K562 (cell line): ENCODE measurements at regions of chr1 and their contacts with region 1.

Region 1: GRCh38 chr1:14924455-14925331 is 228.9 kb upstream of the TMEM51 start:
- DNase-seq: peak; percentile 72 to 88 (median 82)
- ATAC-seq: peak; percentile 78
- H3K4me3 ChIP-seq: peak overlapping the region; percentile 59
- H3K27ac ChIP-seq: peak overlapping the region; percentile 1; the same call in 1 of the 3 replicates
- H3K4me1 ChIP-seq: peaks cover 29 to 33% of the 10 kb centered on the region in 2 experiments
- H3K27me3 ChIP-seq: no peaks in the 10 kb centered on the region; a peak in 1 of 5 replicates
- CTCF ChIP-seq: peak in 2 of 3 experiments; percentile 41 to 42; a peak in 3 of 6 replicates
- EP300 ChIP-seq: no peak
- POLR2A ChIP-seq: no peak
- RAD21 ChIP-seq: peak; percentile 39 to 55; a peak in 3 of 4 replicates

Region 2: DNA sequence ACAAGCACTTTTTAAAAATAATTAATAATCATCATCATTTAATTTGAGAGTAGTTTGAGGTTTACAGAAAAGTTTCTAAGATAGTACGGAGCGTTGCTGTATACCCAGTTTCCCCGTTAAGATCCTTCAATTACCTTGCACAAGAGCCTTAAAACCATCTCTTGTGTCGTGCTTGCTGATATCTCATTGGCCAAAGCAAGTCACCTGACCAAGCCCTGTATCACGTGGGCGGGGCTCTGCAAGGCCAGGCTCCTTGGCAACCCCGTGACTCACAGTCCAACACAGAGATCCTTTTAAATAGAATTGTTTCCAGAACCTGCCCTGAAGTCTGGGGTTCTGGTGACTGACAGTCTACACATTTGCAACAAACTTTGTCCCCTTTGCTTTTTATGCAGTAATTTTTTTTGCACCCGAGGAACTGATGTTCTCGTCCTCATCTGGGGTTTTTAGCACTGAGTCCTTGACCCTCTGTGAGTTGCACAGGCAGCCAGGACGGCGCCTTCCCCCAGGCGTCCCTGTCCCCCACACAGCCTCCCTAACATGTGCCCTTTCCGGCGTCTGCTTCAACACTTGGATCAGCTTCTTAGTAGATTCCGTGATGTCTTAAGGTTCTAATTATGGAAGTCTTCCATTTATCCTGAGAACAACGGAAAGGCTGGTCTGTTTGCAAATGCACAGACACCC is 45.6 kb after region 1 on chr1:
- CTCF ChIA-PET with region 1: no interaction called
- POLR2A ChIA-PET with region 1: no interaction called
- in situ Hi-C with region 1: no loop called
- intact Hi-C with region 1: loop called (anchors 5 kb)
- DNase-seq: peak; percentile 91 to 96 (median 92)
- ATAC-seq: peak; percentile 100
- H3K4me3 ChIP-seq: no peak overlapping the region
- H3K27ac ChIP-seq: no peak overlapping the region
- H3K4me1 ChIP-seq: peaks cover 3 to 4% of the 10 kb centered on the region in 2 experiments; a peak in 2 of 5 replicates
- H3K27me3 ChIP-seq: no peaks in the 10 kb centered on the region
- CTCF ChIP-seq: no peak
- EP300 ChIP-seq: no peak
- POLR2A ChIP-seq: no peak
- RAD21 ChIP-seq: no peak